Activated CD4-positive, alpha-beta T cell treated with anti-CD3 and anti-CD28 coated beads, Interleukin-2, amount 10 ng/mL, durations not matched to agents 24 days and 14 days (primary cell): ENCODE measurements at regions of chr3 and their contacts with region 1.

Region 1: GRCh38 chr3:184174646-184175492 is at the start of gene AP2M1:
- DNase-seq: peak; percentile 100
- H3K4me3 Mint-ChIP-seq: peak within 1 kb of the TSS; percentile 91
- H3K27ac Mint-ChIP-seq: peak within 1 kb of the TSS; percentile 81
- H3K4me1 Mint-ChIP-seq: peaks cover 26% of the 10 kb centered on the region
- H3K27me3 Mint-ChIP-seq: no peaks in the 10 kb centered on the region
- total RNA-seq, gene AP2M1: 241 and 242 TPM in 2 replicates

Region 2: GRCh38 chr3:184085389-184085852 is 89.4 kb before region 1 on chr3:
- intact Hi-C with region 1: no loop called
- DNase-seq: no peak
- H3K4me3 Mint-ChIP-seq: no peak overlapping the region
- H3K27ac Mint-ChIP-seq: peak overlapping the region; percentile 25
- H3K4me1 Mint-ChIP-seq: peaks cover 6% of the 10 kb centered on the region
- H3K27me3 Mint-ChIP-seq: no peaks in the 10 kb centered on the region

Region 3: GRCh38 chr3:184135149-184135910 is 39.5 kb before region 1 on chr3 and contains the start of gene EIF2B5:
- intact Hi-C with region 1: loop called (anchors 1 kb)
- DNase-seq: peak; percentile 96
- H3K4me3 Mint-ChIP-seq: peak within 1 kb of the TSS; percentile 97
- H3K27ac Mint-ChIP-seq: peak within 1 kb of the TSS; percentile 93
- H3K4me1 Mint-ChIP-seq: peaks cover 32% of the 10 kb centered on the region
- H3K27me3 Mint-ChIP-seq: peaks cover 5% of the 10 kb centered on the region
- total RNA-seq, gene EIF2B5: 72.2 and 74.7 TPM in 2 replicates

Region 4: GRCh38 chr3:184154885-184155643 is 19.8 kb before region 1 on chr3 and contains the start of gene DVL3:
- intact Hi-C with region 1: loop called (anchors 1 kb)
- DNase-seq: peak; percentile 88
- H3K4me3 Mint-ChIP-seq: peak within 1 kb of the TSS; percentile 95
- H3K27ac Mint-ChIP-seq: peak within 1 kb of the TSS; percentile 78
- H3K4me1 Mint-ChIP-seq: peaks cover 14% of the 10 kb centered on the region
- H3K27me3 Mint-ChIP-seq: no peaks in the 10 kb centered on the region
- total RNA-seq, gene DVL3: 49.0 and 54.5 TPM in 2 replicates

Region 5: DNA sequence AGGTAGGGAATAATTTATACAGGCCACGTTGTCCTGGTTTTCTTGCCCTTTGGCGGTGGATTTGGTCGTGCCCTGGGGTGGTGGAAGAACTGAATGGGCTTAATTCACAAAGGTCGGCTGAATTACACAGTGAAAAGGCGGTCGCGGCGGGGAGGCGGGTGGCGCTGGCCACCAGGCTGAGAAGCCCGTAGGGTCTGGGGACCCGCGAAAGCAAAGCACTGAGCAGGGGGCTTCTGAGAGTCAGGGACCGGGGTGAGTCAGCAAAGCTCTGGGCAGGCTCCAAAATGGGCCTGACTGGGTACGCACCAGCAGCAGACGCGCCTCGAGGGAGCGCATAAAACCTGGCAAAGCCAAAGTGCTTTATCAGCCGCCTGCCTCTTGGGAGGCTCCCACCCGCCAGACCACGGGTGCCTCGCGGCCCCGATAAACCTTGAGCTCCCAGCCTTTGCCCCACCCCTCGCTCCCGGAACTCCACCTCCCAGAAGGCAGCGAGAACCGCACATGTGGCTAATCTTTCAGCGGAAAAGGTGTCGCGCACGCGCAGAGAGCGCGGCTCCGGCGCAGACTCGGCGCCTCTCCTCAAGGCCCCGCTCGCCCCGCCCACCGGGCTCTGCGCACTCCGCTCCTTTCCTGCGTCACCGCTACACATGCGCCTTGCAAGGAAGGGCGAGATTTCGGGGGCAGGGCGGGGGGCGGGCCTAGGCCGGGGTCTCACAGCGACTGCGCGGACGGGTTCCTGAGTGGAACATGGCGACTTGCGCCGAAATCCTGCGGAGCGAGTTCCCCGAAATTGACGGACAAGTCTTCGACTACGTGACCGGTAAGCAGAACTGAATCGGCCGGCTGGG is 10.8 kb after region 1 on chr3 and contains the start of gene ABCF3:
- intact Hi-C with region 1: loop called (anchors 1 kb)
- DNase-seq: peak; percentile 100
- H3K4me3 Mint-ChIP-seq: peak within 1 kb of the TSS; percentile 92
- H3K27ac Mint-ChIP-seq: peak within 1 kb of the TSS; percentile 92
- H3K4me1 Mint-ChIP-seq: peaks cover 28% of the 10 kb centered on the region
- H3K27me3 Mint-ChIP-seq: no peaks in the 10 kb centered on the region
- total RNA-seq, gene ABCF3: 66.9 and 67.6 TPM in 2 replicates

Region 6: GRCh38 chr3:184227481-184227935 is 52.6 kb after region 1 on chr3:
- intact Hi-C with region 1: loop called (anchors 2 kb)
- DNase-seq: peak; percentile 87
- H3K4me3 Mint-ChIP-seq: no peak overlapping the region
- H3K27ac Mint-ChIP-seq: no peak overlapping the region
- H3K4me1 Mint-ChIP-seq: peaks cover 8% of the 10 kb centered on the region
- H3K27me3 Mint-ChIP-seq: peaks cover 53% of the 10 kb centered on the region

Region 7: GRCh38 chr3:184298759-184299496 is 124.1 kb after region 1 on chr3 and contains the start of gene PSMD2:
- intact Hi-C with region 1: loop called (anchors 1 kb)
- DNase-seq: peak; percentile 98
- H3K4me3 Mint-ChIP-seq: peak within 1 kb of the TSS; percentile 99
- H3K27ac Mint-ChIP-seq: peak within 1 kb of the TSS; percentile 90
- H3K4me1 Mint-ChIP-seq: peaks cover 20% of the 10 kb centered on the region
- H3K27me3 Mint-ChIP-seq: peaks cover 6% of the 10 kb centered on the region
- total RNA-seq, gene PSMD2: 280 and 283 TPM in 2 replicates